PC-9 (cell line): ENCODE measurements at regions of chr20 and their contacts with region 1.

Region 1: DNA sequence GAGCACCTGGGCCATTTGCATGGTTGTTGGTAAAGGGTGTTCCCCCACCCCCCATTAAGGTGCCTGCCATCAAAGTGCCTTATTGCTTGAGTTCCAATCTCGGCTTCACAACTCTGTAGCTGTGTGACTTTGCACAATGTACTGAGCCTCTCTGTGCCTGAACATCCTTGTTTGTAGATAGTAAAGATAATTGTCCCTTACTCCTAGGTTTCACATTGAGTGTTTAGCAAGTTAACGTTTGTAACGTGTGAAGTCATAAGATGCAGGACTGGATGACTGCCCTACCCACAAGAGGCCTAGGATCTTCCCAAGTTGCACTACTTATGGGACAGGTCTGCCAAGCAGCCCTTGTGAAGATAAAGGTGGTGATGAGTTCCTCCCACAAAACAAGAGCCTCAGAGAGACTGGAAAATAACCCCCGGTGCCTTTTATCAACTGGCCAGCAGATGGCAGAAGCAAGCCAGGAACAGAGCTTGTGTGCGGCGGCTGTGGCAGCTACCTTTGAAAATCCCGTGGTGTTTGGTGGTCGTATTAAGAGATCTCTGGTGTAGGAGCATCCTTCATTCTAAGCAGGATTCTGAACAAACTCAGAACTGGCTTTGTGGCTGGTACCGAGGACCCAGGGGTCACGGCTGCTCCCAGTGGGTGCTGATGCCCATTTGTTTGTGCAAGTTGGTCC is 99.0 kb downstream of the CDH26 start:
- DNase-seq: peak; percentile 59 to 60
- H3K4me3 ChIP-seq: no peak overlapping the region
- H3K27ac ChIP-seq: no peak overlapping the region
- H3K4me1 ChIP-seq: no peaks in the 10 kb centered on the region
- H3K27me3 ChIP-seq: no peaks in the 10 kb centered on the region
- CTCF ChIP-seq: peak; percentile 94

Region 2: DNA sequence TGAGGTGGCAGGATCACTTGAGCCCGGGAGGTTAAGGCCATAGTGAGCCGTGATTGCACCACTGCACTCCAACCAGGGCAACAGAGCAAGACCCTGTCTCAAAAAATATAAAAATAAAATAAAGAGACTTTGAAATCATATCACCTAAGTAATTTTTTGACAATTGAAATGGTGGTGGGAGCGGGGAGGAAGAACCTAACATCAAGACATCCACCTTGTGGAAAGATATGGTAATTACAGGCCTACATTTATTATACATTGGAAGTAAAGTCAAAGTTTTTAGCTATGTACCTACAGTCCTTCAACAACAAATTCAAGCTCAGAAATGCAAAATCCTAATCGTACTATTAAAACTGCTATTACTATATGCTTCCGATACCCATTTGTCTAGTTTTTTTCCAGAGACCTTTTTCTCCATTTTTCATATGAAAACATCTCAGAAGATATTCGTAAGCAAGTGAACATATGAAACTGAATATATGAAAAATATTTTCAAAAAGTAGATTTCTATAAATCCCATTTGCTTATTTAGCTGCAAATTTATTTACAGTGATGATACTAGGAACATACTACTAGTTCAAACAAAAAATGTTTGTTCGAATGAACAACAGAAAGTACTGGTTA is 207.1 kb before region 1 on chr20:
- CTCF ChIA-PET with region 1: no interaction called
- POLR2A ChIA-PET with region 1: no interaction called
- intact Hi-C with region 1: loop called (anchors 10 kb)
- DNase-seq: no peak
- H3K4me3 ChIP-seq: no peak overlapping the region
- H3K27ac ChIP-seq: no peak overlapping the region
- H3K4me1 ChIP-seq: peaks cover 17% of the 10 kb centered on the region
- H3K27me3 ChIP-seq: no peaks in the 10 kb centered on the region
- CTCF ChIP-seq: peak; percentile 92

Region 3: GRCh38 chr20:60262967-60263603 is 205.8 kb after region 1 on chr20:
- CTCF ChIA-PET with region 1: no interaction called
- POLR2A ChIA-PET with region 1: no interaction called
- intact Hi-C with region 1: loop called (anchors 1 kb)
- DNase-seq: peak in 1 of 2 experiments; percentile 16
- H3K4me3 ChIP-seq: no peak overlapping the region
- H3K27ac ChIP-seq: no peak overlapping the region
- H3K4me1 ChIP-seq: no peaks in the 10 kb centered on the region
- H3K27me3 ChIP-seq: peaks cover 89% of the 10 kb centered on the region
- CTCF ChIP-seq: peak; percentile 79

Region 4: DNA sequence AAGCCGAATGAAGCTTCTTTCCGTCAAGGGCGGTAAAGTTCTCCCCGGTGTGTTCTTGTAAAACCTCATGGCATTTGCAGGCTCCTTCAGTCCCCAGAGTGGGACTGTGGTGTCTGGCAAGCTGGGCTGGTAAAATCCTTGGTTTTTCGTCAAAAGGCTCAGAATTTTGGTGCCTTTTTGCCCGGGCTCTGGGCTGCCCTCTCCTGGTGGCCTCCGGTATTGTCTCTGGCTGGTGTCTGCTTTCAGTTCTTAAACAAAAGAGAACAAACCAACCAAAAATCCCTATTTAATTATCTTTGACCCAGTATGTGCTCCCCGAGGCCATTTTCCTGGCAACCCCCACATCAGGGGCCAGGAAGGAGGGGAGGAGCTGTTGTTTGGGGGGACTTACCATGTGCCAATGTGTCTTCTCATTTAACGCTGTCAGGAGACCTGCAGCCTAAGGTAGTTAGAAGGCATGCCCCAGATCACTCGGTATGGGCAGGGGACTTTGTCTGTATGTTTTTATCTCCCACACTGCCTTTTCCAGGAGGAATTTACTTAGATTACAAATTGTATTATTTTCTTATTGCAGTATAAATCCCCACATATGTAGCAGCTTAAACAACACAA is 1205.9 kb after region 1 on chr20:
- CTCF ChIA-PET with region 1: no interaction called
- POLR2A ChIA-PET with region 1: no interaction called
- intact Hi-C with region 1: loop called (anchors 2 kb)
- DNase-seq: peak in 1 of 2 experiments; percentile 15
- H3K4me3 ChIP-seq: no peak overlapping the region
- H3K27ac ChIP-seq: no peak overlapping the region
- H3K4me1 ChIP-seq: no peaks in the 10 kb centered on the region
- H3K27me3 ChIP-seq: peaks cover 89% of the 10 kb centered on the region
- CTCF ChIP-seq: peak; percentile 95

Region 5: GRCh38 chr20:61896058-61896961 is 1839.0 kb after region 1 on chr20:
- CTCF ChIA-PET with region 1: no interaction called
- POLR2A ChIA-PET with region 1: no interaction called
- intact Hi-C with region 1: loop called (anchors 2 kb)
- DNase-seq: peak in 1 of 2 experiments; percentile 54
- H3K4me3 ChIP-seq: no peak overlapping the region
- H3K27ac ChIP-seq: no peak overlapping the region
- H3K4me1 ChIP-seq: no peaks in the 10 kb centered on the region
- H3K27me3 ChIP-seq: peaks cover 94% of the 10 kb centered on the region
- CTCF ChIP-seq: peak; percentile 83